Gastrocnemius medialis (tissue), 4 donors: ENCODE measurements at regions of chr15 and their contacts with region 1.

Region 1: DNA sequence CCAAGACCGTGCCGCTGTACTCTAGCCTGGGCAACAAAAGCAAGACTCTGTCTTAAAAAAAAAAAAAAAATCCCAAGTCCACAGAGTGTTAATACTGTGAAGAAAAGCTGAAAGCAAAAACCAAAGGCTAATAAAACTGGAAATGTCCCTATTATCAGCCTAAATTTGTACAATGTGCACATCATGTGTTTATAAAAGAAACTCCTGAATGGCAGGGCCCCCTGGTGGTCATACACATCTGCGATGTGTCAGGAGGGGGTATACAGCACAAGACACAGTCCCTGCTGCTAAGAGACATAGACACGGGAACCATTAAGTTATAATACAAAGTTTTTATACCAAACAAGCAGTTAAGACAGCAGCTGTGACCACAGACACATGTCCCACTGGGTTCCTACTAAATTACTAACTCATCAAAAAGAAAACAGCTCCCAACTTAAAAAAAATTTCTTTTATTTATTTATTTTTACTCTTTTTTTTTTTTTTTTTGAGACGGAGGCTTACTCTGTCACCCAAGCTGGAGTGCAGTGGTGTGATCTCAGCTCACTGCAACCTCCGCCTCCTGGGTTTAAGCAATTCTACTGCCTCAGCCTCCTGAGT is 31.0 kb downstream of the IDH2 start:
- DNase-seq: peak; percentile 59 to 81
- ATAC-seq: peak; percentile 43 to 58
- H3K4me3 ChIP-seq: no peak overlapping the region
- H3K27ac ChIP-seq: peak overlapping the region; percentile 82 to 93 (median 90)
- H3K4me1 ChIP-seq: peaks cover 15 to 26% of the 10 kb centered on the region in 2 donors
- H3K27me3 ChIP-seq: no peaks in the 10 kb centered on the region
- CTCF ChIP-seq: peak; percentile 78 to 84 (median 79)
- POLR2A ChIP-seq: no peak

Region 2: GRCh38 chr15:89680282-89680873 is 390.9 kb before region 1 on chr15:
- in situ Hi-C with region 1: no loop called
- intact Hi-C with region 1: loop called (anchors 10 kb)
- DNase-seq: peak; percentile 77 to 82
- ATAC-seq: peak; percentile 99
- H3K4me3 ChIP-seq: no peak overlapping the region
- H3K27ac ChIP-seq: peak overlapping the region; percentile 50 to 84 (median 78)
- H3K4me1 ChIP-seq: peaks cover 28 to 36% of the 10 kb centered on the region in 2 donors
- H3K27me3 ChIP-seq: no peaks in the 10 kb centered on the region
- CTCF ChIP-seq: no peak
- POLR2A ChIP-seq: no peak

Region 3: DNA sequence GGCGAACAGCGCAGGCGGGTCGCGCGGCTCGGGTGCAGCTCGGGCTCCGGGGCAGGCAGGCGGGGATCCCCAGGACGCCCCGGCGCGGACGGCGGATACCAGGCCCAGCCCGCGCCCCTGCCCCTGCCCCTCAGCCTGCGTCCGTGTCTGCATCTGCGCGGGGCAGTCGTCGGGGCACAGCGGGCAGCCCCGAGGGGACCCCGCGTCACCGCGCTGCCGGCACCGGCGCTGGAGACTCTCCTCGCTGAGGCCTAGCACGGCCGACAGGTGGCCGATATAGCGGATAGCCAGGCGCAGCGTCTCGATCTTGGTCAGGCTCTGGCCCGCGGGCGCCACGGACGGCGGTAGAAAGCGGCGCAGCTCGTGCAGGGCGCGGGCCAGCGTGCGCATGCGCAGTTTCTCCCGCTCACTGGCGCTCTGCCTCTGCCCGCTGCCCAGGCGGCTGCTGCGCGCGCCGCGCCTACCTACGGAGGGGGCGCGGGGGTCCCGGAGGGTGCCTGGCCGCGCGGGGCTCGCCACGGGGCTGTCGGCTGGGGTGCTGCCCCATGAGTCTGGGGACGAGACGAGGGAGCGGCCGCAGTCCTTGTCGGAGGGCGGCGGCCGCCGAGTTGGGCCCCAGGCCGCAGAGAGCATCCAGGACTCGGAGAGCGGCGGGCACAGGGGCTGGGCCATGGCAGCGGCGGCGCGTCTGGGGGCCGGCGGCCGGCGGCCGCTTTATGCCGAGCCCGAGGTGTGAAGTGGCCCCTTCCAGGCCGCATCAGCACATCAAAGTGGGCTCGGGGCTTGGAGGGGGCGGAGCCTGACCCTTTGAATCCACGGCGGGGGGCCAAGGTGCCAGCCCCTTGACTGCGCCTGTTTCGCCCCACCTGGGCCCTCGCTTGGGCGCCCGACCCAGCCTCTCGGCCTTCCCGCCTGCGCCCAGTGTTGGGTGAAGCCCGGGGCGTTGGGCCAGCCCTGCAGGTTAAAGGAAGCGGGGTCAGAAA is 320.5 kb before region 1 on chr15 and contains the start of gene MESP1:
- in situ Hi-C with region 1: loop called (anchors 10 to 25 kb)
- intact Hi-C with region 1: no loop called
- DNase-seq: peak; percentile 87 to 90
- ATAC-seq: peak; percentile 95 to 97
- H3K4me3 ChIP-seq: peak within 1 kb of the TSS; percentile 56 to 97 (median 76)
- H3K27ac ChIP-seq: peak within 1 kb of the TSS; percentile 45 to 80 (median 70)
- H3K4me1 ChIP-seq: peaks cover 9 to 11% of the 10 kb centered on the region in 2 donors
- H3K27me3 ChIP-seq: peaks cover 0 to 2% (median 0%) of the 10 kb centered on the region in 3 donors
- CTCF ChIP-seq: peak; percentile 74 to 86 (median 80)
- POLR2A ChIP-seq: peak; percentile 77 to 81
- total RNA-seq, gene MESP1: 5.3 to 12.6 (median 6.1) TPM

Region 4: DNA sequence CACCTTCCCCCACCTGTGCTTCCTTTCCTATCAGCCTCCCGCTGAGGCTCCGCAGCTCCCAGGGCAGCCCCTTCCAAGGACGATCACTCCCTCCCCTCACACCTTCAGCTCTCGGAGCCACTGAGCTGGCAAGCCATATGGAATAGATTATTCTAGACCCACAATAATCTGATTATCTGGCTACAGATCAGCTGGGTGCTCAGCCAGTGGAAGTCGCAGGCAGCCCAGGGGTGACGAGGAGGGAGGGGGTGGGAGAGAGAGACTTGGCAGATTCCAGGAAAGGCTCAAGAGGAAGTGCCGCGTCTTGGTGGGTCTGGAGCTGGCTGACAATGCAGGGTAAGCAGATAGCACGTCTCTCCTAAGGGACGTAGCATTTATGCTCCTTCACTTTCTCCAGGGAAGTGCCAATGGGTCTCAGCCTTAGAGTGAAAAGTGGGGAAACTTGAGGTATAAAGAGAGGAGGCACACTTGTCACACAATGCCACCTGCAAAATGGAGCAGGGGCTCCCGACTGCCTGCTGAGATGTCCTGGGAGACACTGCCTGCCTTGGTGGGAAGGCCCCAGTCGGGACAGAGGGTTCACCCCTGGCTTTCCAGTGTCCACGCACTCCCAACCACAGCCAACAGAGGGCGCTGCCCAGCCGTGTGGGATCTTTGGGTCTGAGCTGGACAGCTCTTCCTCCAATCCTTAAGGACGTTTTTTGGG is 310.9 kb before region 1 on chr15:
- in situ Hi-C with region 1: loop called (anchors 10 to 25 kb)
- intact Hi-C with region 1: loop called (anchors 5 kb)
- DNase-seq: peak; percentile 42 to 68
- ATAC-seq: peak; percentile 85 to 93
- H3K4me3 ChIP-seq: no peak overlapping the region
- H3K27ac ChIP-seq: no peak overlapping the region
- H3K4me1 ChIP-seq: peaks cover 0 to 10% of the 10 kb centered on the region in 2 donors
- H3K27me3 ChIP-seq: no peaks in the 10 kb centered on the region
- CTCF ChIP-seq: peak; percentile 81 to 97 (median 93)
- POLR2A ChIP-seq: no peak

Region 5: DNA sequence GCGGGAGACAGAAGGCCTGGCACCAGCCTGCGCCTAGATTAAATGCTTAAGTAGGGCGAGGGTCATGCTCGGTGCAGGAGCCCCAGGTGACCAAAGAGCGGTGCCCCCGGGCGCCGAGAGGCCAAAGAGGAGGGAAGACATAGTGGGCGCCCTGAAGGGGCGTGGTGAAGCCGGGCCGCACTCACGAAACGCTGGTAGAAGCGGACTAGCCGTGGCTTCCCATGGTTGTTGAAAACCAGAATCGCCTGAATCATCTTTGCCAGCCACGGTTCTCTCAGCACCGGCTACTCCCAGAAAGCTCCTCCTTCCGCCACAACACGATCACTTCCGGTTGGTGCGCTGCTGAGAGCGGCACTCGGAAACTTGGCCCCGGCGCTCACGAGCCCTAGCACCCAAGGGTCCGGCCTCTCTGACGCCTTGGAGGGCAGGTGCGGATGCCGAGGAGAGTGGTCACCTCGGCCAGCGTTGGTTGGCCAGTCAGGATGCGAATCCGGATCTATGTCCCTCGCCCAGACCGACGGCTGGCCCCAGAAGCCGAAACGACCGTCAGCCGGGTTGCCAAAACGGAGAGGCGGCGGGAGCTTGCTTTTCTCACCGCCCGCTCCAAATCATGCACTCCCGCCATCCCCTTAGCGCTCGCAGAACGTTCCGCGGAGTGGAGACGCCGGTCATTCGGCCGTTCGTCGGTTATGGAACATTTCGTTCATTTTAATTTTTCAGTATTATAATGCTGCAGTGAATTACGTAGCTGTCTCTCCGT is 177.4 kb before region 1 on chr15 and contains the start of gene AP3S2:
- in situ Hi-C with region 1: loop called (anchors 5 to 10 kb)
- intact Hi-C with region 1: loop called (anchors 5 kb)
- DNase-seq: peak; percentile 85 to 90
- ATAC-seq: peak; percentile 97
- H3K4me3 ChIP-seq: peak within 1 kb of the TSS; percentile 68 to 95 (median 80)
- H3K27ac ChIP-seq: peak within 1 kb of the TSS; percentile 90 to 95 (median 90)
- H3K4me1 ChIP-seq: peaks cover 10 to 16% of the 10 kb centered on the region in 2 donors
- H3K27me3 ChIP-seq: no peaks in the 10 kb centered on the region
- CTCF ChIP-seq: peak in 1 of 5 experiments; percentile 13
- POLR2A ChIP-seq: peak; percentile 68 to 75
- total RNA-seq, gene AP3S2: 48.4 to 82.6 (median 71.3) TPM

Region 6: GRCh38 chr15:89912674-89913396 is 158.5 kb before region 1 on chr15 and contains the start of gene ARPIN:
- in situ Hi-C with region 1: no loop called
- intact Hi-C with region 1: no loop called
- DNase-seq: peak in 1 of 2 donors; percentile 27
- ATAC-seq: peak; percentile 63 to 84
- H3K4me3 ChIP-seq: peak within 1 kb of the TSS; percentile 71 to 97 (median 80)
- H3K27ac ChIP-seq: peak within 1 kb of the TSS; percentile 47 to 79 (median 68)
- H3K4me1 ChIP-seq: peaks cover 13 to 18% of the 10 kb centered on the region in 2 donors
- H3K27me3 ChIP-seq: no peaks in the 10 kb centered on the region
- CTCF ChIP-seq: no peak
- POLR2A ChIP-seq: no peak
- total RNA-seq, gene ARPIN: 4.8 to 10.9 (median 6.0) TPM

Region 7: GRCh38 chr15:90001683-90002427 is 69.5 kb before region 1 on chr15:
- in situ Hi-C with region 1: loop called in 1 of 4 experiments (anchors 10 kb)
- intact Hi-C with region 1: loop called (anchors 2 kb)
- DNase-seq: peak; percentile 36 to 62
- ATAC-seq: peak; percentile 45 to 52
- H3K4me3 ChIP-seq: peak overlapping the region; percentile 63 to 80 (median 66)
- H3K27ac ChIP-seq: peak overlapping the region; percentile 78 to 87 (median 82)
- H3K4me1 ChIP-seq: peaks cover 36 to 42% of the 10 kb centered on the region in 2 donors
- H3K27me3 ChIP-seq: no peaks in the 10 kb centered on the region
- CTCF ChIP-seq: no peak
- POLR2A ChIP-seq: peak; percentile 20 to 54